A549 (cell line): ENCODE measurements at regions of chr3 and their contacts with region 1.

Region 1: GRCh38 chr3:57169872-57170623 is 4.9 kb upstream of the IL17RD start:
- DNase-seq: peak; percentile 67 to 70
- ATAC-seq: peak; percentile 92 to 94
- H3K4me3 ChIP-seq: peak overlapping the region; percentile 50
- H3K27ac ChIP-seq: peak overlapping the region; percentile 75 to 92
- H3K4me1 ChIP-seq: no peaks in the 10 kb centered on the region
- CTCF ChIP-seq: peak; percentile 76
- EP300 ChIP-seq: no peak
- POLR2A ChIP-seq: no peak; the same call in 1 of the 2 replicates
- RAD21 ChIP-seq: peak; percentile 77 to 82

Region 2: DNA sequence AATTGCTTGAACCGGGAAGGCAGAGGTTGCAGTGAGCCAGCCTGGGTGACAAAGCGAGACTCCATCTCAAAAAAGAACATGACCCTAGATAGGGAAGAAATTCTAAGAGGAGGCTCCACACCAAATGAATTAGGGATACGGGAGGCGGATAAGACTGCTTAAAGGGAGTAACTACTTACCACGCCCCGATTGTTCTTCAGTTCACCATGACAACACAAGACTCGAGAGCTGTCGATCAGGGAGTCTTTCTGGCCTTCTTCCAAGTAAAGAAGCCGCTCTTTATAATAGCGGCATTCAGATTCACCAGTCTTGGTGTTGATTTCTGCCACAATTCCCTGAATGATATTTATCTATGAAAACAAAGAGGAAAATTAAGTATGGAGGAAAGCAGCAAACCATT is 433.0 kb before region 1 on chr3:
- CTCF ChIA-PET with region 1: no interaction called
- POLR2A ChIA-PET with region 1: no interaction called
- DNase-seq: no peak
- ATAC-seq: no peak
- H3K4me3 ChIP-seq: no peak overlapping the region
- H3K27ac ChIP-seq: no peak overlapping the region
- H3K4me1 ChIP-seq: no peaks in the 10 kb centered on the region
- CTCF ChIP-seq: no peak
- EP300 ChIP-seq: no peak
- POLR2A ChIP-seq: no peak
- RAD21 ChIP-seq: no peak

Region 3: GRCh38 chr3:57158813-57159738 is 11.0 kb before region 1 on chr3:
- CTCF ChIA-PET with region 1: interaction called, 13 read pairs
- POLR2A ChIA-PET with region 1: no interaction called
- DNase-seq: no peak
- ATAC-seq: no peak
- H3K4me3 ChIP-seq: no peak overlapping the region
- H3K27ac ChIP-seq: no peak overlapping the region
- H3K4me1 ChIP-seq: no peaks in the 10 kb centered on the region
- CTCF ChIP-seq: no peak
- EP300 ChIP-seq: no peak
- POLR2A ChIP-seq: no peak
- RAD21 ChIP-seq: no peak

Region 4: DNA sequence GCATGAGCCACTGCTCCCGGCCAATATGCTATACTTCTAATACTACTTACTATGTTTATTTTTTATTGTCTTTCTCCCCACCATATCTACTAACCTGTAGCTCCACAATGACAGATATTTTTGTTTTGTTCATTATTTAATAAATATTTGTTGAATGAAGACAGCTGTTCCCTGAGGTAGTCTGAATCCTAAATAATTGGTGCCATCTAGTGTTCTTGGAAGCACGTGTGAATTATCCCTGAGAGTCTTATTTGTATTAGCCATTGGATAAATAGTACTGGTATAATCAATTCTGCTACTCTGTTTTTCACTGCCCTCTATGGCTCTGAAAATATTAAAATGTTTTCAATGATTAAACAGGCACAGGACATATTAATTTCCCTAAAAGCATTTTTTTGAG is 51.8 kb after region 1 on chr3:
- CTCF ChIA-PET with region 1: interaction called, 20 read pairs
- POLR2A ChIA-PET with region 1: no interaction called
- DNase-seq: peak in 1 of 2 experiments; percentile 20
- ATAC-seq: peak in 1 of 2 experiments; percentile 67; a peak in 3 of 6 replicates
- H3K4me3 ChIP-seq: no peak overlapping the region
- H3K27ac ChIP-seq: no peak overlapping the region
- H3K4me1 ChIP-seq: peaks cover 8% of the 10 kb centered on the region; the same call in 1 of the 3 replicates
- CTCF ChIP-seq: peak; percentile 47
- EP300 ChIP-seq: no peak
- POLR2A ChIP-seq: no peak
- RAD21 ChIP-seq: peak; percentile 53 to 65

Region 5: DNA sequence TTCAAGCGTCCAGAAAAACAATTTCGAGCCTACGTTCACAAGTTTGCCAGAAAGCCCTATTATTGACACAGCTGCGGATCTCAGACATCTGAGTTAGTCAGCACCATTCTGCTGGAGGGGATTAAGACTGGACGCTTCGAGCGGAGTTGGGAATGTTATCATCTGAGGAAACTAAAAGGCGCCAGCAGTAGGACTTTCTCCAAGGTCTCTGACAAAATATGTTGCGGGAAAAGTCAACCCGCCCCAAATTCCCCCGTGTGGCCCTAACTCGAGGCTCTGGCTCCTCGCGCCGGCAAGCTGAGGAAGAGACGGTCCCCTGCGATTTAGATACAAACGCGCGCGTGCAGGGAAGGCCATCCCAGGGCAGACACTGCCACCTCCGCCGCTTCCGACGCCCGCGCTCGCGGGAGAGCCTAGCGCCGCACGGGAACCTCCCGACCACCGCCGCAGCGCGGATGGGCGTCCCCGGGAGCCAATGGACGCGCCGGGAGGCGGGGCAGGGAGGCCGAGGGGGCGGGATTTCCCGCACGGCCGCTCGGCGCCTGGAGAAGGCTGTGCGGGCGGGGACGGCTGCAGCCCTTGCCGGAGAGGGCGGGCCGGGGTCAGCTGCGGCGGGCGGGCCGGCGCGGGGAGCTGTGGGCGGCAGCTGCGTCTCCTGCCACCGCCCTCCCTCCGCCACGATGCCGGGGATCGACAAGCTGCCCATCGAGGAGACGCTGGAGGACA is 57.3 kb after region 1 on chr3 and contains the start of gene APPL1:
- CTCF ChIA-PET with region 1: interaction called, 20 read pairs
- POLR2A ChIA-PET with region 1: no interaction called
- DNase-seq: peak; percentile 85 to 87
- ATAC-seq: peak; percentile 95 to 98
- H3K4me3 ChIP-seq: peak within 1 kb of the TSS; percentile 91
- H3K27ac ChIP-seq: peak within 1 kb of the TSS; percentile 87 to 98
- H3K4me1 ChIP-seq: peaks cover 18% of the 10 kb centered on the region; the same call in 2 of the 3 replicates
- CTCF ChIP-seq: no peak
- EP300 ChIP-seq: no peak
- POLR2A ChIP-seq: peak; percentile 80
- RAD21 ChIP-seq: no peak
- polyA plus RNA-seq, gene APPL1: 25.9 and 30.3 TPM in 2 replicates